Right ventricle myocardium inferior (tissue), 1 donor: ENCODE measurements at regions of chr7 and their contacts with region 1.

Region 1: DNA sequence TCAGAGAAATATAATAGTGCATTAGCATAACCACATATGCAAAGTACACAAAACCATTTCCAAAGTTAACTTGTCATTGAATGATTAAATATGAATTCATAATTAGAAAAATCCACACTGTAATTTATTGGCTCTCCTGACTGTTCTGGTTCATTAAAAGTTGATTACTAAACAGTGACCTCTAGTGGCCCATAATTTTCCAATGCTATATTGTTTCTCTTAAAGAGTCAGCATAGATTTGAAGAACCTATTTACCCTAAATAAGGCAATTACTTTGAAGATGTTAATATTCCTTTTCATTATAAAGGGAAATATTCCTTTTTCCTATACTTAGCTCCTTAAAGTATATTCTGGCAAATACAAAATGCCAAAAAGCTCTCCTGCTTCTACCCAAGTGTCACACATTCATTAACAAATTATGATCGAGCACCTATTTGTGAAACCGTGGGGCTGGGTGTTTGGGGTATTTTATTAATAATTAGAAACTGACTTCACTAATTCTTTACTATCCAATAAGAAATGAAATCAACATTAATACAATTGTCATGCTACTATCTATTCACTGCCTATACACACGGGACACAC is 86.2 kb downstream of the HIBADH start:
- DNase-seq: no peak
- ATAC-seq: no peak

Region 2: GRCh38 chr7:27196287-27196767 is 380.1 kb before region 1 on chr7:
- intact Hi-C with region 1: loop called (anchors 5 kb)
- DNase-seq: peak; percentile 88
- ATAC-seq: peak; percentile 50

Region 3: DNA sequence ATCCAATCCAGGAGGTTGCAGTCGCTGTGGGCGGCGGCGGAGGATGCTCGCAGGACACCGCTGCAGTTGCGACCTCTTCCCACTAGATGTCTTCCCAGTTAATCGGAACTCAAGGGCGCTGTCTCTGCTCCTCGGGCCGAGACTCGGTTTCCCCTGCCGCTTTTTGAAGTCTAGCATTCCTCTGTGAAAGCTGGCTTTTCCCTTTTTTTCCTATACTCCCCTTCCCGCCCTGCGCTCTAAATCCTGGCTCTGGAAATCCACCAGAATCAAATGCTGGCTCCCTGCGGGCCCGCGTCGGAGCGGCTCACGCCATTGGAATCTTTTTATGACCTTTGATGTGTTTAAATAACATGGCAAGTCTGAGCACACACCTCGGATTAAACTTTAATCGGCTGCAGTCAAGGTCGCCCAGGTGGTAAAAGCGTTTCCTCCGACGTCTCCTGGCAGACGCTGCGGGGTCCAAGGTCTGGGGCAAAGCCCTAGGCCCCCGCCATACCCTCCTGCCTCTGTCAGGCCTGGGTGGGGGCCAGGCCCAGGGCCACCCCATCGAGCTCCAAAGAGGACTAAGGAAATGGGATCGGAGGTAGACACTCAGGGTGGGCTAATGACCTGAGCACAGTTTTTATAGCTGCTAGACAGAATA is 365.9 kb before region 1 on chr7:
- intact Hi-C with region 1: loop called (anchors 5 kb)
- DNase-seq: no peak
- ATAC-seq: peak; percentile 59

Region 4: GRCh38 chr7:27235387-27236311 is 340.8 kb before region 1 on chr7:
- intact Hi-C with region 1: loop called (anchors 10 kb)
- DNase-seq: peak; percentile 75
- ATAC-seq: peak; percentile 56

Region 5: GRCh38 chr7:27689591-27690164 is 113.2 kb after region 1 on chr7:
- intact Hi-C with region 1: no loop called
- DNase-seq: no peak
- ATAC-seq: no peak